ENCODE measurements at regions of chr19 and their contacts with region 1.

Region 1: DNA sequence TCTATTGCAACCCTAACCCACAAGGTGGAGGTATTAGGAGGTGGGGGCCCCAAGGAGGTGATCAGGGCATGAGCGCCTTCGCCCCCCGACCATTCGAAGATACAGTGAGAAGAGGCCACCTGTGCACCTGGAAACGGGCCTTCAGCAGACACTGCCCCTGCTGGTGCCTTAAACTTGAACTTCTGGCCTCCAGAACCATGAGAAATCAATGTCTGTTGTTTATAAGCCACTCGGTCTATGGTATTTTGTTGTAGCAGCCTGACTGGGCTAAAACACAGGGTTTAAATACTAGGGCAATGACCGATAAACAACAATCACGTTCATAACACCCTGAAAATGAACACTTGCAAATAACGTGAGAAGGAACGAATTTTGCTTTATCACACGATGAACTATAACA is 85.2 kb upstream of the USP29 start:
- DNase-seq: peak; percentile 11
- ATAC-seq: peak; percentile 66
- H3K4me3 ChIP-seq: no peak overlapping the region; a peak in 1 of 6 replicates
- H3K27ac ChIP-seq: no peak overlapping the region
- H3K4me1 ChIP-seq: peaks cover 29% of the 10 kb centered on the region
- H3K27me3 ChIP-seq: no peaks in the 10 kb centered on the region
- CTCF ChIP-seq: peak; percentile 28; the same call in 1 of the 2 replicates
- EP300 ChIP-seq: no peak
- POLR2A ChIP-seq: no peak
- RAD21 ChIP-seq: no peak

Region 2: GRCh38 chr19:56995303-56995702 is 39.2 kb before region 1 on chr19:
- CTCF ChIA-PET with region 1: no interaction called
- POLR2A ChIA-PET with region 1: no interaction called
- in situ Hi-C with region 1: no loop called
- intact Hi-C with region 1: loop called (anchors 1 kb)
- DNase-seq: peak; percentile 58
- ATAC-seq: peak; percentile 61
- H3K4me3 ChIP-seq: no peak overlapping the region
- H3K27ac ChIP-seq: no peak overlapping the region
- H3K4me1 ChIP-seq: peaks cover 25% of the 10 kb centered on the region; the same call in 1 of the 2 replicates
- H3K27me3 ChIP-seq: no peaks in the 10 kb centered on the region
- CTCF ChIP-seq: no peak
- EP300 ChIP-seq: no peak
- POLR2A ChIP-seq: no peak
- RAD21 ChIP-seq: no peak

Measured in HepG2 (cell line).